Dendritic cell treated with granulocyte-macrophage colony-stimulating factor and Interleukin-4, amounts not matched to agents 40 ng/mL and 50 ng/mL, for 4 days (primary cell): ENCODE measurements at regions of chr6 and their contacts with region 1.

Region 1: GRCh38 chr6:2853761-2854395 is 12.2 kb upstream of the SERPINB1 start:
- H3K4me3 Mint-ChIP-seq: peak overlapping the region; percentile 58
- H3K27ac Mint-ChIP-seq: peak overlapping the region; percentile 93
- H3K4me1 Mint-ChIP-seq: peaks cover 73% of the 10 kb centered on the region
- H3K27me3 Mint-ChIP-seq: no peaks in the 10 kb centered on the region

Region 2: DNA sequence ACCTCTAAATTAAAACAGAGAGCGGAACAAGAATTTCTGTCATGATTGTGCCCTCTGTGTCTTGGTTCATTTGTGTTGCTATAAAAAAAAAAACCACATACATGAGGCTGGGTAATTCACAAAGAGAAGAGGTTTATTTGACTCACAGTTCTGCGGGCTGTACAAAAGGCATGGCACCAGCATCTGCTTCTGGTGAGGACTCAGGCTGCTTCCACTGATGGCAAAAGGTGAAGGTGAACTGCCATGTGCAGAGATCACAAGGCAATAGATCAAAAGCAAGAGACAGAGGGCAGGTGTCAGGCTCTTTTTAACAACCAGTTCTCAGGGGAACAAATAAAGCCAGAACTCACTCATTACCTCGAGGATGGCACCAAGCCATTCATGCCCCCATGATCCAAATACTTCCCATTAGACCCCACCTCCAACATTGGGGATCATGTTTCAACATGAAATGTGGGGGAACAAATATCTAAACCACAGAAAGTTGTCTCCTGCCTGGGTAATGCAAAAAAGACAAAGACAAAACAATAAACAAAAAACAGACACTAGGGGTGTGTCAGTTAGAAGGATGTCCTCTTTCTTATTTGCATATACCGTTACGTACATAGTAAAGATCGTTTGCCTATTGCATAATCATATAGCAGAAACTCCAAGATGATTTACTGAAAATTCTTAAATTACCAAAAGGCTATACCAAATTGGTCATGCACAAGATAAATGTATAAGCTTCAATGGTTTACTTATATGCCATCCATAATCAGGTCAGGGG is 32.3 kb after region 1 on chr6:
- intact Hi-C with region 1: loop called (anchors 5 kb)
- H3K4me3 Mint-ChIP-seq: no peak overlapping the region
- H3K27ac Mint-ChIP-seq: no peak overlapping the region
- H3K4me1 Mint-ChIP-seq: peaks cover 44% of the 10 kb centered on the region
- H3K27me3 Mint-ChIP-seq: no peaks in the 10 kb centered on the region